CD4-positive, alpha-beta memory T cell (primary cell): ENCODE measurements at regions of chr22 and their contacts with region 1.

Region 1: GRCh38 chr22:39940757-39941305 is 19.4 kb upstream of the TMA7B start:
- DNase-seq: peak; percentile 60 to 72 (median 67)
- H3K4me3 ChIP-seq: no peak overlapping the region
- H3K4me3 Mint-ChIP-seq: peak overlapping the region in 7 of 8 donors; percentile 26 to 79 (median 57)
- H3K27ac ChIP-seq: peak overlapping the region; percentile 29
- H3K27ac Mint-ChIP-seq: peak overlapping the region in 6 of 7 donors; percentile 48 to 91 (median 89)
- H3K4me1 ChIP-seq: peaks cover 100% of the 10 kb centered on the region
- H3K4me1 Mint-ChIP-seq: peaks cover 78 to 96% (median 87%) of the 10 kb centered on the region in 4 donors
- H3K27me3 ChIP-seq: no peaks in the 10 kb centered on the region
- H3K27me3 Mint-ChIP-seq: no peaks in the 10 kb centered on the region

Region 2: DNA sequence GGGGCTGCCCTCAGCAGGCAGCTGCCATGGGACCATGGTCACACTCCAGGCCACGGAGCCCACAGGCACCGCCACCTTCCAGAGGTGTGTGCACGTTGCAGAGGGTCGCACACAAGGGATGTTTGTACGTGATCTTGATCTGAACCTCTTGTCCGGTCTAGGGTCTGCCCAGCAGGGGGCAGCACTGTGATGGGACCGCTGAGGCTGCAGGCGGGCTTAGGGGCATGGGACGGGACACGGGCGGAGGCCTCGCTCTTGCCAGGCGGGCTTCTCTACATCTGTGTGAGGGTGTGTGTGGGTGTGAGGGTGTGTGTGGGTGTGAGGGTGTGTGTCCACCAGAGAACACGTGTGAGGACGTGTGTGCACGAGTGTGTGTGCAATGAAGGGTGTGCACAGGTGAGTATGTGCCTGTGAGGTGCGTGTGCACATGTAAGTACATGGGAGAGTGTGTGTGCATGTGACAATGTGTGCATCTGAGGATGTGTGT is 317.9 kb before region 1 on chr22:
- CTCF ChIA-PET with region 1: interaction called, 7 read pairs
- POLR2A ChIA-PET with region 1: no interaction called
- intact Hi-C with region 1: loop called (anchors 1 kb)
- DNase-seq: peak; percentile 58 to 69 (median 64)
- H3K4me3 ChIP-seq: no peak overlapping the region
- H3K4me3 Mint-ChIP-seq: no peak overlapping the region
- H3K27ac ChIP-seq: no peak overlapping the region
- H3K27ac Mint-ChIP-seq: no peak overlapping the region
- H3K4me1 ChIP-seq: peaks cover 9% of the 10 kb centered on the region
- H3K4me1 Mint-ChIP-seq: peaks cover 4 to 5% (median 5%) of the 10 kb centered on the region in 4 donors
- H3K27me3 ChIP-seq: no peaks in the 10 kb centered on the region
- H3K27me3 Mint-ChIP-seq: peaks cover 1 to 8% of the 10 kb centered on the region in 2 donors

Region 3: GRCh38 chr22:39873965-39874364 is 66.9 kb before region 1 on chr22:
- CTCF ChIA-PET with region 1: no interaction called
- POLR2A ChIA-PET with region 1: no interaction called
- intact Hi-C with region 1: no loop called
- DNase-seq: no peak
- H3K4me3 ChIP-seq: no peak overlapping the region
- H3K4me3 Mint-ChIP-seq: no peak overlapping the region
- H3K27ac ChIP-seq: no peak overlapping the region
- H3K27ac Mint-ChIP-seq: no peak overlapping the region
- H3K4me1 ChIP-seq: no peaks in the 10 kb centered on the region
- H3K4me1 Mint-ChIP-seq: peaks cover 0 to 6% (median under 1%) of the 10 kb centered on the region in 4 donors
- H3K27me3 ChIP-seq: no peaks in the 10 kb centered on the region
- H3K27me3 Mint-ChIP-seq: no peaks in the 10 kb centered on the region

Region 4: DNA sequence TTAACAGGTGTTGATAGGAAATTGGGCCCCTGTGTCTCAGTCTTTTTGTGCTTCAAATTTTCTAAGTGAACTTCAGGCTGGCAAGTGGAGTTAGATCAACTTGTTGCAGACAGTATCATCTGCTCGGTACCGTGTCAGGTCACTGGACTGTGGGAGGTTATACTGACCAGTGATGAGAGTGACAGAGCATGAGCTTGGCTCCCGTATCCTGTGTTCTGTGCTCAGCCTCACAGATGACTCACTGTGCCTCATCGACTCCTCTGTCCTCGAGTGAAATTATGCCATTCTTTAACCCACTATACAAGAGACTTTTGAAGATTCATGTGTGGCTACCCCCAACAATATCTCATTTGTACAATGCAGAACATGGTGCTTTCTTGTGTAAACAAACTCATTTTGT is 32.1 kb before region 1 on chr22:
- CTCF ChIA-PET with region 1: no interaction called
- POLR2A ChIA-PET with region 1: interaction called, 97 read pairs
- intact Hi-C with region 1: no loop called
- DNase-seq: peak in 1 of 5 donors; percentile 76
- H3K4me3 ChIP-seq: peak overlapping the region in 1 of 2 donors; percentile 57
- H3K4me3 Mint-ChIP-seq: peak overlapping the region; percentile 91 to 100 (median 97)
- H3K27ac ChIP-seq: peak overlapping the region; percentile 75
- H3K27ac Mint-ChIP-seq: peak overlapping the region in 6 of 7 donors; percentile 91 to 98 (median 96)
- H3K4me1 ChIP-seq: peaks cover 83% of the 10 kb centered on the region
- H3K4me1 Mint-ChIP-seq: peaks cover 53 to 89% (median 64%) of the 10 kb centered on the region in 4 donors
- H3K27me3 ChIP-seq: no peaks in the 10 kb centered on the region
- H3K27me3 Mint-ChIP-seq: no peaks in the 10 kb centered on the region

Region 5: GRCh38 chr22:39927544-39927943 is 13.3 kb before region 1 on chr22:
- CTCF ChIA-PET with region 1: interaction called, 68 read pairs
- POLR2A ChIA-PET with region 1: interaction called, 74 read pairs
- intact Hi-C with region 1: no loop called
- DNase-seq: no peak
- H3K4me3 ChIP-seq: peak overlapping the region; percentile 22 to 27
- H3K4me3 Mint-ChIP-seq: no peak overlapping the region
- H3K27ac ChIP-seq: peak overlapping the region; percentile 49
- H3K27ac Mint-ChIP-seq: peak overlapping the region in 1 of 7 donors; percentile 92
- H3K4me1 ChIP-seq: peaks cover 100% of the 10 kb centered on the region
- H3K4me1 Mint-ChIP-seq: peaks cover 36 to 42% (median 40%) of the 10 kb centered on the region in 4 donors
- H3K27me3 ChIP-seq: no peaks in the 10 kb centered on the region
- H3K27me3 Mint-ChIP-seq: no peaks in the 10 kb centered on the region